Naive thymus-derived CD4-positive, alpha-beta T cell (primary cell): ENCODE measurements at regions of chr11 and their contacts with region 1.

Region 1: GRCh38 chr11:47980245-47981049 is at the start of gene PTPRJ:
- DNase-seq: peak; percentile 46 to 75 (median 66)
- ATAC-seq: peak; percentile 85
- H3K4me3 ChIP-seq: peak within 1 kb of the TSS; percentile 67
- H3K4me3 Mint-ChIP-seq: peak within 1 kb of the TSS; percentile 77 to 95 (median 90)
- H3K27ac ChIP-seq: peak within 1 kb of the TSS; percentile 79
- H3K27ac Mint-ChIP-seq: peak within 1 kb of the TSS; percentile 12 to 86 (median 64)
- H3K4me1 ChIP-seq: peaks cover 25% of the 10 kb centered on the region in 2 donors
- H3K4me1 Mint-ChIP-seq: peaks cover 29 to 37% (median 35%) of the 10 kb centered on the region in 7 donors
- H3K27me3 ChIP-seq: no peaks in the 10 kb centered on the region
- H3K27me3 Mint-ChIP-seq: peaks cover 0 to 19% (median 0%) of the 10 kb centered on the region in 5 donors
- total RNA-seq, gene PTPRJ: 31.8 to 82.3 (median 53.9) TPM

Region 2: GRCh38 chr11:47950396-47950795 is 30.1 kb before region 1 on chr11:
- CTCF ChIA-PET with region 1: no interaction called
- POLR2A ChIA-PET with region 1: interaction called, 3 read pairs
- intact Hi-C with region 1: loop called in 1 of 2 experiments (anchors 1 kb)
- DNase-seq: peak; percentile 14 to 82 (median 78)
- ATAC-seq: peak; percentile 92
- H3K4me3 ChIP-seq: no peak overlapping the region
- H3K4me3 Mint-ChIP-seq: peak overlapping the region; percentile 51 to 80 (median 70)
- H3K27ac ChIP-seq: peak overlapping the region; percentile 73
- H3K27ac Mint-ChIP-seq: peak overlapping the region; percentile 83 to 98 (median 96)
- H3K4me1 ChIP-seq: peaks cover 4 to 26% of the 10 kb centered on the region in 2 donors
- H3K4me1 Mint-ChIP-seq: peaks cover 25 to 60% (median 48%) of the 10 kb centered on the region in 7 donors
- H3K27me3 ChIP-seq: no peaks in the 10 kb centered on the region
- H3K27me3 Mint-ChIP-seq: no peaks in the 10 kb centered on the region

Region 3: DNA sequence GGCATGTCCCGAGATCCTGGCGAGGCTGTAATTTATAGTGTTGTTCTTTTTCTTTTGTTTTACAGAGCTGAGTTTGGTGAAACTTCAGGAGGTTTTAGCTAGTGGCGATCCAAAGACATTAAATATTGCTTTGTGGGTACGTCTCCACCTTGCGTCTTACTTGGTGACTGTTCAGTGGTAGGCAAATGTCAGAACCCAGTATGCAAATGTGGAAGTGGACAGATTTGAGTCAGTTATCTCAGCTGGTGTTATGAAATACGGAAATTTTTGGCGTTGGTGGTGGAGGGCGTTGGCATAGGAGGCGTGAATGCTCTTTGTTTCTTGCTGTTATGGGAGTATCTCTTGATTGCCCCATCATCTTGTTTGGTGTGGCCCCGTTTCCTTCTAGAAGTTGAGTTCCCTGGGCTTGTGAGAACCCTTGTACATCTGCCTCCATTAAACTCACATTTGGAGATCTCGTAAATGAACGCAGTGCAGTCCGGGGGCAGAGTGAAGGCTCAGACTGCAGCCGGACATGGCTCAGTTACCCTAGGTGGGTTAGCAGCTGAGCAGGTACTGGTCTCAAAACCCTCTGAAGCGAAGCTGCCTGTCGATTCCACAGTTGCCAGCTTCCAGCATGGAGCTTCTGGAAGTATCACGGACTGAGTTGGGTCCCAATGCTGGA is 39.8 kb after region 1 on chr11:
- CTCF ChIA-PET with region 1: no interaction called
- POLR2A ChIA-PET with region 1: no interaction called
- intact Hi-C with region 1: loop called (anchors 5 kb)
- DNase-seq: no peak
- ATAC-seq: peak; percentile 80
- H3K4me3 ChIP-seq: no peak overlapping the region
- H3K4me3 Mint-ChIP-seq: peak overlapping the region in 6 of 10 donors; percentile 2 to 43 (median 7)
- H3K27ac ChIP-seq: no peak overlapping the region
- H3K27ac Mint-ChIP-seq: peak overlapping the region; percentile 2 to 78 (median 67)
- H3K4me1 ChIP-seq: peaks cover 43 to 56% of the 10 kb centered on the region in 2 donors
- H3K4me1 Mint-ChIP-seq: peaks cover 45 to 83% (median 70%) of the 10 kb centered on the region in 7 donors
- H3K27me3 ChIP-seq: no peaks in the 10 kb centered on the region
- H3K27me3 Mint-ChIP-seq: no peaks in the 10 kb centered on the region

Region 4: GRCh38 chr11:48043111-48043990 is 62.9 kb after region 1 on chr11:
- CTCF ChIA-PET with region 1: interaction called, 3 read pairs
- POLR2A ChIA-PET with region 1: no interaction called
- intact Hi-C with region 1: loop called in 1 of 2 experiments (anchors 1 kb)
- DNase-seq: peak in 5 of 9 donors; percentile 34 to 51 (median 44)
- ATAC-seq: peak; percentile 70
- H3K4me3 ChIP-seq: peak overlapping the region; percentile 18
- H3K4me3 Mint-ChIP-seq: peak overlapping the region; percentile 44 to 82 (median 69)
- H3K27ac ChIP-seq: peak overlapping the region; percentile 59
- H3K27ac Mint-ChIP-seq: peak overlapping the region; percentile 67 to 91 (median 83)
- H3K4me1 ChIP-seq: peaks cover 14 to 29% of the 10 kb centered on the region in 2 donors
- H3K4me1 Mint-ChIP-seq: peaks cover 46 to 78% (median 74%) of the 10 kb centered on the region in 7 donors
- H3K27me3 ChIP-seq: no peaks in the 10 kb centered on the region
- H3K27me3 Mint-ChIP-seq: no peaks in the 10 kb centered on the region

Region 5: DNA sequence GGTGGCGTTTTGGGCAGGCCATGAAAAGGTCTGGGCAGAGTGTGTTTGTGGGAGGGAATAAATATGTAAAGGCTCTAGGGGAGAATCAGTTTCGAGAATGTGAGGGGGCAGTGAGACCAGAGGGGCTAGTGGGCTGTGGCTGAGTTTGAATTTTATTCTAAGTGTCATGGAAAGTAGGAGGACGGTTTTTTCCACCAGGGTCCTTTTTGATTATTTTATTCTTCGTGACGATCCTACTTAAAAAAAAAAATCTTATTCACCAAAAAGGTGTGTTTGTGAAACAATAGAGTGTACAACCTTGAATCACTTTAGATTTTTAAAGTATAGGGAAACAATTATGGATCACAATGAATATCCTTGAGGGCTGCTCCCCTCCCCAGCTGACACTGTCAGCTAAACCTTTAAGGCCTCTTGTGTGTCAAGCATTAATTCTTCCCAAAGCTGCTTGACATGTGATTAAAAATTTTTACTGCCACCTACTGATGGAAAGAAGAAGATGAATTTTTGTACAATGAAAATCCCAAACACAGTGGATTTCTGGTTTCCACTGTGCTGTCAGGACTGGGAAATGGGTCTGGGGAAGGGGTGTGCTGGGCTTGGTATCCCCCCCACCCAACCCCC is 128.7 kb after region 1 on chr11:
- CTCF ChIA-PET with region 1: interaction called, 4 read pairs
- POLR2A ChIA-PET with region 1: interaction called, 3 read pairs
- intact Hi-C with region 1: loop called in 1 of 2 experiments (anchors 1 kb)
- DNase-seq: peak in 6 of 9 donors; percentile 20 to 50 (median 32)
- ATAC-seq: peak; percentile 57
- H3K4me3 ChIP-seq: peak overlapping the region; percentile 26
- H3K4me3 Mint-ChIP-seq: peak overlapping the region; percentile 38 to 86 (median 76)
- H3K27ac ChIP-seq: peak overlapping the region; percentile 30
- H3K27ac Mint-ChIP-seq: peak overlapping the region in 8 of 9 donors; percentile 14 to 90 (median 80)
- H3K4me1 ChIP-seq: peaks cover 18 to 27% of the 10 kb centered on the region in 2 donors
- H3K4me1 Mint-ChIP-seq: peaks cover 32 to 59% (median 49%) of the 10 kb centered on the region in 7 donors
- H3K27me3 ChIP-seq: no peaks in the 10 kb centered on the region
- H3K27me3 Mint-ChIP-seq: no peaks in the 10 kb centered on the region

Region 6: DNA sequence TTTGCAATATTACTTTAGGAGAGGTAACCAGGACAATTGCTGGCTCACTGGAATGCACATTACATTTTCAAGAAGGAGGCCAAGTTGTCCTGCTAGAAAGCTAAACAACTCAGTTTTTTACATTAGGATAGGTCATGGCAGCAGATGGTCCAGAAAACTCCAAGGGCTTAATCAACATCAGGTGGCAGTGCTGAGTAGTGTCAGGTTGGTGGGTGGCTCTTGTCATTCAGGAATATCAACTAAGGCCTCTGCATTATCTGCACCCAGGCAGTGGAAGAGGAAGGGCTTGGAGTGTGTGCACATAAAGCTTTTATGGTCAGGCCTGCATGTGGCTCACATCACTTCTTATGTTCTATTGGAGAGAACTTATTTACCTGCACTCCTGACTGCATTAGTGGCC is 204.0 kb after region 1 on chr11:
- CTCF ChIA-PET with region 1: no interaction called
- POLR2A ChIA-PET with region 1: no interaction called
- intact Hi-C with region 1: no loop called
- DNase-seq: no peak
- ATAC-seq: no peak
- H3K4me3 ChIP-seq: no peak overlapping the region
- H3K4me3 Mint-ChIP-seq: no peak overlapping the region
- H3K27ac ChIP-seq: no peak overlapping the region
- H3K27ac Mint-ChIP-seq: no peak overlapping the region
- H3K4me1 ChIP-seq: no peaks in the 10 kb centered on the region
- H3K4me1 Mint-ChIP-seq: peaks cover 0 to 9% (median 2%) of the 10 kb centered on the region in 7 donors
- H3K27me3 ChIP-seq: no peaks in the 10 kb centered on the region
- H3K27me3 Mint-ChIP-seq: peaks cover 0 to 10% (median 5%) of the 10 kb centered on the region in 5 donors